ENCODE measurements at regions of chr10 and their contacts with region 1.

Region 1: GRCh38 chr10:13673156-13673555 is 86.4 kb downstream of the PRPF18 start:
- DNase-seq: no peak
- ATAC-seq: no peak
- H3K4me3 ChIP-seq: no peak overlapping the region
- H3K27ac ChIP-seq: no peak overlapping the region
- H3K4me1 ChIP-seq: peaks cover 0 to 57% (median 20%) of the 10 kb centered on the region in 9 donors
- H3K27me3 ChIP-seq: no peaks in the 10 kb centered on the region
- CTCF ChIP-seq: no peak

Region 2: DNA sequence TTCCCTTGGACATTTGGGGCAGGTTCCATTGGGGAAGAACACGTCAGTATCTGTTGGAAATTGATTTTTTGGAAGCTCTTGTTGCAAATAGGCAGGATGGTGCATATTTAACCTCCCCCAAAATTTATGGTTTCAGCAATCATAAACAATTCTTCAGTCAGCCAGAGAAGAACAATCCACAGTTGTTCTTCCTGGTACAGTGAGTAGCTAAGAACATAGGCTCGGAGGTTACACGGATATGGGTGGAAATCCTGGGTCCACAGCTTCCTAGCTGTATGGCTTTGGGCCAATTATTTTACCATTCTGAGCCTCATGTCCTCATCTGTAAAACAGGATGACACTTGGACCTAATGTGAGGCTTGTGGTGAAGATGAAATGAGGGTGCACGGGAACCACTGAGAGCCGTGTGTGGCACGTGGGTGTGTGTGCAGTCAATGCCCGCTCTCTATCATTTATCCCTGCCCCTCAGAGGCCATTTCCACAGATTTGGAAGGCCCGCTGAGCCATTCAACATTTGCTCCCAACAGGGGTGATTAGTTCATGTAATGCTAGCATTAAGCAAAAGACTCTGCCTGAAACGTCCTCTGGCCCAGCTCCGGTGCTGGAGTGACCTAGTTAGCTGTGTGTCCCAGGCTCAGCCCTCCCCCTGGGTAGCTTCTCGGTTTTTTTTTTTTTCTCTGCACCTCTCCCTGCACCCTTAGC is 1314.1 kb before region 1 on chr10:
- intact Hi-C with region 1: no loop called
- DNase-seq: no peak
- ATAC-seq: peak in 3 of 8 donors; percentile 47 to 62 (median 52)
- H3K4me3 ChIP-seq: no peak overlapping the region
- H3K27ac ChIP-seq: no peak overlapping the region
- H3K4me1 ChIP-seq: peaks cover 0 to 10% (median 0%) of the 10 kb centered on the region in 9 donors
- H3K27me3 ChIP-seq: peaks cover 0 to 5% (median 0%) of the 10 kb centered on the region in 7 donors
- CTCF ChIP-seq: no peak

Region 3: DNA sequence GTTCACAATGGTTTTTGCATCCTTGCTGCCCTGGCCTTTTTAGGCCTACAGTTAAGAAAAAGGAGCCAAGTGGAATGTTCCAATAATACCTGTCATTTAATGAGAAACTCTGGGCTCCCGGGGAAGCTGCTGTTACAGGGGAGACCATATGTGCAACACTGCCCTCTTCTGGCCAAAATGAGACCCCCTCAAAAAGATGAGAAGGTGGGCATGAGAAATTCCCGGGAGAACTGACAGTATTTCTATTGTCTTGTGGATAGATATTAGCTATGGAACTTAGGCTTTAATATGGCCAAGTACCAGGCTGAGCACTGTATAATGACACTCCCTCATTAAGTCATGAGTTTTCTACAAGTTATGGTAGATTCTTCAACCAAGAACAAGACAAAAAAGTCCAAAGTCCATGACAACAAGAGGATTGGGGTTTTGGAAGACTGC is 771.0 kb before region 1 on chr10:
- intact Hi-C with region 1: no loop called
- DNase-seq: peak in 1 of 2 donors; percentile 62
- ATAC-seq: peak in 3 of 8 donors; percentile 33 to 46 (median 34)
- H3K4me3 ChIP-seq: no peak overlapping the region
- H3K27ac ChIP-seq: no peak overlapping the region
- H3K4me1 ChIP-seq: peaks cover 0 to 9% (median 0%) of the 10 kb centered on the region in 9 donors
- H3K27me3 ChIP-seq: peaks cover 0 to 11% (median 0%) of the 10 kb centered on the region in 7 donors
- CTCF ChIP-seq: peak; percentile 54 to 88 (median 78)

Region 4: DNA sequence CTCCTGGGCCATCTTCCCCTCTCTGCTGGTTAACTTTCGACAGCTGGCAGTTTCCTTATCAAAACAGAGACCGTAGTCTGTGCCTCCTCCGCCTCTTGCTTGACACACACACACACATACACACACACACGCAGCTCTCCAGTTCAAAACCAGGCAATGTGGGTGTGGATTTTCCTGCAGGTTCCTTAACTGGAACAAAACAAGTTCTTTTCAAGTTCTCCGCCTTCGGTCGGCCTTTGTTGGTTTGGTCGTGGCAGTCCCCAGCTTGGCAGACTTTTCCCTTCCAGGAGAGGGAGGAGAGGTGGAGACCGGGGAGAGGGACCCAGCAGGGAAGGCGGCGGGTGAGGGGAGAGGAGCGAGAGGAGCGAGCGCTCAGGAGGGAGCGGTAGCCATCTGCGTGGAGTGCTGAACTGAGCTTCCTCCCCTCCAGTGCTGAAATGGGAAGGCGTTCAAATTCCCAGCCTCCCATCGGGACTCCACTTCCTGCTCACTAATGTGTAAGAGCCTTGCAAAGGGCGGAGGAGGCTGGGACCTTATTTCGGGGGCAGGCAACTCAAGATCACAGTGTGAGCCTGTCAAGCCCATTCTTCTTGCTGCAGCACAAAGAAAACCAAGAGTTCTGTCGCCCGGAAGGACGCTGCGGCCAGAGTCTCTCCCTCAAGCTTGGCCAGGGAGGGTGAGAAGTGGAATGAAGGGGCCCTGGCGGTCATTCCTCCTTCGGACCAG is 34.2 kb after region 1 on chr10:
- intact Hi-C with region 1: loop called in 5 of 10 experiments (anchors 5 to 10 kb)
- DNase-seq: peak; percentile 80 to 94
- ATAC-seq: peak; percentile 86 to 93 (median 90)
- H3K4me3 ChIP-seq: peak overlapping the region; percentile 7 to 70 (median 63)
- H3K27ac ChIP-seq: peak overlapping the region; percentile 44 to 91 (median 84)
- H3K4me1 ChIP-seq: peaks cover 11 to 90% (median 76%) of the 10 kb centered on the region in 9 donors
- H3K27me3 ChIP-seq: no peaks in the 10 kb centered on the region
- CTCF ChIP-seq: peak in 1 of 9 donors; percentile 17

Region 5: DNA sequence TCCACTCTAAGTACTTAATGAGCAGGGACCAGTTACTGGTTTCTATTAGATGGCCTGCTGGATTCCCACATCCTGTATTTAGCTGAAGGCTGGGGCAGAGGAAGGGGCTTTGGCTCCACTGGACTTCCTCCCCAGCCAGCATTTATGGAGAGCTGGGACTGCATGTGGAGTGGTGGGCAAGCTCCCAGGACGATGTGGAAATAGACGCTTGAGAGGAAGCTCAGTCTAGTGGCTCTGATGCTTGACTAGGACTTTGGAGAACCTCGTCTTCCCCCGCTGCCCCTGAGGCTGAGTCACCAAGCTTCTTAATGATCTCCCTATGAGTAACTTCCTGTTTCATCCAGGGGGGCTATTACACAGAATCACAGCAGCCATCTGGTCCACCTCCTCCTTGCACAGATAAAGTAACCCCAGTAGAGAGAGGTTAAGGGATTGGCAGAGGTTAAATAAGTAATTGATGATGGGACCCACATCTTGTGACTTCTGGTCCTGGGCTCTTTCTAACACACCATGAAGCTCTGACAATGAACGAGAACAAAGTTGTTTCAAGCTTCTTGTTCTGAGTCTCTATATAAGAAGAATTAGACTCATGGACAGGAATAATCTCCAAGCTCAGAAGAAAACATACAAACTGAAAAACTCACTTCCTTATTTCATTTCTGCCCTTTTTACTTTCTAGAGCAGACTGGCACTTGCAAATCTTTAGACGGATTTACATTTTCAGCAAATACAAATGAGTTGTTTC is 39.9 kb after region 1 on chr10:
- intact Hi-C with region 1: loop called in 5 of 10 experiments (anchors 5 to 10 kb)
- DNase-seq: peak; percentile 67 to 80
- ATAC-seq: peak; percentile 67 to 90 (median 74)
- H3K4me3 ChIP-seq: no peak overlapping the region
- H3K27ac ChIP-seq: peak overlapping the region in 9 of 10 donors; percentile 20 to 85 (median 61)
- H3K4me1 ChIP-seq: peaks cover 9 to 71% (median 51%) of the 10 kb centered on the region in 9 donors
- H3K27me3 ChIP-seq: no peaks in the 10 kb centered on the region
- CTCF ChIP-seq: no peak

Measured in heart right ventricle (tissue), 16 donors.